AG04450 (cell line): ENCODE measurements at regions of chr1 and their contacts with region 1.

Region 1: DNA sequence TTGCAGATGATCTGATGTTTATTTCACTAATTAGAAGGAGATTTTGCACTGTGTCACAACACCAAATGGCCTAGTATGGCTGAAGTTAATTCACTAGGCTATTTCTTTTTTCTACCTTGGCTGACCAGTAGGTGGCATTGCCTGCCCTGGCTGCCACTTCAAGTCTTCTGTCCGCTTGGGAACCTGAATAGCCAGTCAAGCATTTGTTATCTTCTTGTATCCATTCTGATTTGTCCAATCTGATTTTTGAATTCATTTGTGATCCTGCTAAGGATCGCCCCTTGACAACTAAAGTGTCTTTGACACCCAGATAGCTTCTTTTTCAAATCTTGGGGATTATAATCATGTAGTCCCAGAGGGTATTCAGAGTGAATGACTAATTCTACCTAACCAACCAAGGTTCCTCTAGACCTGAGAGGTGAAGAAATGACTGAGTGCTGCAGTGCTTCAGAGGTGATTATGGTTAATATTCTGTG is 99.4 kb downstream of the GIPC2 start:
- DNase-seq: peak; percentile 38
- H3K4me3 ChIP-seq: no peak overlapping the region
- H3K27ac ChIP-seq: no peak overlapping the region
- H3K27me3 ChIP-seq: no peaks in the 10 kb centered on the region
- CTCF ChIP-seq: peak; percentile 96

Region 2: GRCh38 chr1:78081980-78082860 is 62.9 kb before region 1 on chr1:
- CTCF ChIA-PET with region 1: no interaction called
- POLR2A ChIA-PET with region 1: no interaction called
- DNase-seq: no peak
- H3K4me3 ChIP-seq: no peak overlapping the region
- H3K27ac ChIP-seq: no peak overlapping the region
- H3K27me3 ChIP-seq: no peaks in the 10 kb centered on the region
- CTCF ChIP-seq: no peak

Region 3: DNA sequence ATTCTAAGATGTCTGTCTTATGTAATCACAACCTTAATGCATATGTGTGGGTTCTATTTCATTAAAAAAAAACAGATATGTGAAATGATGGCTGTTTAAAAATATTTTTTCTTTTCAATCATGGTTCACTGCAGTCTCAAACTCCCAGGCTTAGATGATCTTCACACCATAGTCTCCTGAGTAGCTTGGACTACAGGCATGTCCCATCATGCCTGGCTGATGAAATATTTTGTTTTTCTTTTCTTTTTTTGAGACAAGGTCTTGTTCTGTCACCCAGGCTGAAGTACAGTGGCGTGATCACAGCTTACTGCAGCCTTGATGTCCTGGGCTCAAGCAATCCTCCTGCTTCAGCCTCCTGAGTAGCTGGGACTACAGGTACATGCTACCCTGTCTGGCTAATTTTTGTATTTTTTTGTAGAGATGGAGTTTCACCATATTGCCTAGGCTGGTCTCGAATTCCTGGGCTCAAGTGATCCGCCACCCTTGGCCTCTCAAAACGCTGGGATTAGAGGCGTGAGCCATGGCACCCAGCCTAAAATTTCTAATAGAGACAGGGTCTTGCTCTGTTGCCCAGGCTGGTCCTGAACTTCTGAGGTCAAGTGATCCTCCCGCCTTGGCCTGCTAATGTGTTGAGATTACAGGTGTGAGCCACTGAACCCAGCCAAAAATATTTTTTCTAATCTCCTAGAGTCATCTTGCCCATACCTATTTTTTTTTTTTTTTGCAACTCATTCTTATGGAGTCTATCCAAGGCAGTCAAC is 31.8 kb before region 1 on chr1:
- CTCF ChIA-PET with region 1: no interaction called
- POLR2A ChIA-PET with region 1: no interaction called
- DNase-seq: no peak
- H3K4me3 ChIP-seq: no peak overlapping the region
- H3K27ac ChIP-seq: no peak overlapping the region
- H3K27me3 ChIP-seq: no peaks in the 10 kb centered on the region
- CTCF ChIP-seq: no peak

Region 4: GRCh38 chr1:78156805-78157521 is 11.8 kb after region 1 on chr1:
- CTCF ChIA-PET with region 1: interaction called, 16 read pairs
- POLR2A ChIA-PET with region 1: no interaction called
- DNase-seq: peak; percentile 24
- H3K4me3 ChIP-seq: no peak overlapping the region
- H3K27ac ChIP-seq: no peak overlapping the region
- H3K27me3 ChIP-seq: no peaks in the 10 kb centered on the region
- CTCF ChIP-seq: no peak

Region 5: GRCh38 chr1:78491451-78492071 is 346.4 kb after region 1 on chr1:
- CTCF ChIA-PET with region 1: interaction called, 13 read pairs
- POLR2A ChIA-PET with region 1: no interaction called
- DNase-seq: no peak
- H3K4me3 ChIP-seq: peak overlapping the region; percentile 71
- H3K27ac ChIP-seq: peak overlapping the region; percentile 52
- H3K27me3 ChIP-seq: no peaks in the 10 kb centered on the region
- CTCF ChIP-seq: no peak

Region 6: DNA sequence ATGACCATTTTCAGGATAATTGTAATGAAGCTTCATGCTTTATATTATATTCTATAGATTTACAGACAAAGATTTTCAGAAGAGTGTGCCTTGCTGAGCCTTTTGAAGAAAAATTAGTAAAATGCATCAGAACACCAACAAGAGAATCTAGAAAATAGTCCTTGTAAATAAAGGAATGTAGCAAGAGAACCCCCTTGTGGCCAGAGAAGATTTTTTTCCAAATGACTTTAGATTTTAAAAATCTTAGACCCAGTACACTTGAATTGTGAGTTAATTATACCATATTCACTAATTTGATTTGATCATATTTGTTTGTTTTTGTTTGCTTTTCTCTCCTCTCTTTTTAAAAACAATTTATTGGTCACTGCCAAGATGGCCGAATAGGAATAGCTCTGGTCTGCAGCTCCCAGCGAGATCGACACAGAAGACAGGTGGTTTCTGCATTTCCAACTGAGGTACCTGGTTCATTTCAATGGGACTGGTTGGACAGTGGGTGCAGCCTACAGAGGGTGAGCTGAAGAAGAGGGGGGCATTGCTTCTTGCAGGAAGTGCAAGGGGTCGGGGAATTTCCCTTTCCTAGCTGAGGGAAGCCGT is 462.3 kb after region 1 on chr1:
- CTCF ChIA-PET with region 1: interaction called, 202 read pairs
- POLR2A ChIA-PET with region 1: no interaction called
- DNase-seq: no peak
- H3K4me3 ChIP-seq: no peak overlapping the region
- H3K27ac ChIP-seq: no peak overlapping the region
- H3K27me3 ChIP-seq: no peaks in the 10 kb centered on the region
- CTCF ChIP-seq: peak; percentile 63

Region 7: DNA sequence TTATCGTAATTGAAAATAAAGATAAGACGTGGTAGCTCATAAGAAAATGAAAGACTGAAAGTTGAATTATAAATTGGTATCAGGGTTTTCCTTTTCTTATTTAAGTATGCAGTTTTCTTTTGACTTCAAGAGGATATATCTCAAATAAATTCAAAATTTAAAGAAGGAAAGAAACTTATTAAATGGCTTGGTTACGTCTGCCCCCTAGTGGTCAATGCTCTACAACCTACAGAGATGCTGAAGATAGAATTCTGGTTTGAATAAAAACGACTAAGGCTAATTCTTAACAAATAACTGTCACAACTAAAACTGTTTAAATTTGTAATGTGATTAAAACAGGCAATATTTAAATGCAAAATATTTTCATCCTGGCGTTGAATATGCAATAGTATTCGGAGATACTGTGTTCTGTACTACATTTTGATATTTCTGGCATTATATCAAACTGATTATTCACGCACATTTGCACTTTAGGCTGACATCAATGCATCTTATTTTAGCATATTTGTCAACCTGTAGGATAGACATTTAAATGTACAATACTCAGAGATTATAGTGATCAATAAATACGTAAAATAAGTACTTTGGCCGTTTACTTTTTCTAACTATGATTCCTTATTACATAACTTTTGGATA is 531.3 kb after region 1 on chr1:
- CTCF ChIA-PET with region 1: interaction called, 14 read pairs
- POLR2A ChIA-PET with region 1: no interaction called
- DNase-seq: peak; percentile 41
- H3K4me3 ChIP-seq: no peak overlapping the region
- H3K27ac ChIP-seq: no peak overlapping the region
- H3K27me3 ChIP-seq: no peaks in the 10 kb centered on the region
- CTCF ChIP-seq: peak; percentile 85